CD4-positive, alpha-beta memory T cell (primary cell): ENCODE measurements at regions of chr1 and their contacts with region 1.

Region 1: DNA sequence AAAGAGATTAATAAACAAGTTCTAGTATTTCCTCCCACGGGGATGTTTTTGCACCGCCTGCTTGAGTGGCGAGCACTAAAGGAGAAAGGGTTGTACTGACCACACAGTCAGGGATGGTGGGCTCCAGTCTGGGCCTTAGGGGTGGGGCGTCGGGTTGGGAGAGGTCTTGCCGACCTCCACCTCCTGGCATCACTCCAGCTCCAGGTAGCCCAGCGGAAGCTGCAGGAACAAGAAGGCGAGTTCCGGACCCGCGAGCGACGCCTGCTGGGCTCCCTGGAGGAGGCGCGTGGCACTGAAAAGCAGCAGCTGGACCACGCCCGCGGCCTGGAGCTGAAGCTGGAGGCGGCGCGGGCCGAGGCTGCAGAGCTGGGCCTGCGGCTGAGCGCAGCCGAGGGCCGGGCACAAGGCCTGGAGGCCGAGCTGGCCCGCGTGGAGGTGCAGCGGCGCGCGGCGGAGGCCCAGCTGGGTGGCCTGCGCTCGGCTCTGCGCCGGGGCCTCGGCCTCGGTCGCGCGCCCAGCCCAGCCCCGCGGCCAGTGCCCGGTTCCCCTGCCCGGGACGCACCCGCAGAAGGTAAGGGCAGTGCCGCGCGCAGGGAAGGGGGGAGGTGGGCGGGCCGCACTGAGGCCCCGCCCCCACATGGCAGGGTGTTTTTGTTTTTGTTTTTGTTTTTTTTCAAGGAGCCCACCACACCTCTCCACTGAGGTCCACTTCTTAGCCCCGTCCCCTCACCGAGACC is 19.7 kb downstream of the MFAP2 start:
- DNase-seq: peak; percentile 68 to 79 (median 68)
- H3K4me3 ChIP-seq: peak overlapping the region; percentile 8 to 62
- H3K4me3 Mint-ChIP-seq: peak overlapping the region; percentile 84 to 92 (median 88)
- H3K27ac ChIP-seq: peak overlapping the region; percentile 37
- H3K27ac Mint-ChIP-seq: peak overlapping the region; percentile 41 to 91 (median 74)
- H3K4me1 ChIP-seq: peaks cover 13% of the 10 kb centered on the region
- H3K4me1 Mint-ChIP-seq: peaks cover 6 to 16% (median 13%) of the 10 kb centered on the region in 4 donors
- H3K27me3 ChIP-seq: no peaks in the 10 kb centered on the region
- H3K27me3 Mint-ChIP-seq: no peaks in the 10 kb centered on the region

Region 2: DNA sequence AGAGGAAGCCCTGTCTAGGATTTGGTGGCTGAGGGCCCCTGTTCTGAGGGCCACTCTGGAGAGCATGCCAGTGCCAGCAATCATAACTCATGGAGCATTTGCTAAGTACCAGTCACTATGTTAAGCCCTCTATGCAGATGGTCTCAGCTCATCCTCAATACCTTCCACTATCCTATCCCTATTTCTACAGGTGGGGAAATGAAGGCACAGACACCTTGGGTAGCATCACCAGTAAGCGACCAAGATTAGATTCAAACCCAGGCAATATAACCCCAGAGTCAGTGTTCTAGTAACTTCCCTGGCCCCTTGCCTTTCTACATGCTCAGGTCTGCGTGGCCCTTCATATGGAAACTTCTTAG is 339.4 kb before region 1 on chr1:
- CTCF ChIA-PET with region 1: interaction called, 15 read pairs
- POLR2A ChIA-PET with region 1: no interaction called
- intact Hi-C with region 1: no loop called
- DNase-seq: no peak
- H3K4me3 ChIP-seq: no peak overlapping the region
- H3K4me3 Mint-ChIP-seq: no peak overlapping the region
- H3K27ac ChIP-seq: no peak overlapping the region
- H3K27ac Mint-ChIP-seq: no peak overlapping the region
- H3K4me1 ChIP-seq: no peaks in the 10 kb centered on the region
- H3K4me1 Mint-ChIP-seq: peaks cover 0 to 3% (median 0%) of the 10 kb centered on the region in 4 donors
- H3K27me3 ChIP-seq: no peaks in the 10 kb centered on the region
- H3K27me3 Mint-ChIP-seq: no peaks in the 10 kb centered on the region

Region 3: DNA sequence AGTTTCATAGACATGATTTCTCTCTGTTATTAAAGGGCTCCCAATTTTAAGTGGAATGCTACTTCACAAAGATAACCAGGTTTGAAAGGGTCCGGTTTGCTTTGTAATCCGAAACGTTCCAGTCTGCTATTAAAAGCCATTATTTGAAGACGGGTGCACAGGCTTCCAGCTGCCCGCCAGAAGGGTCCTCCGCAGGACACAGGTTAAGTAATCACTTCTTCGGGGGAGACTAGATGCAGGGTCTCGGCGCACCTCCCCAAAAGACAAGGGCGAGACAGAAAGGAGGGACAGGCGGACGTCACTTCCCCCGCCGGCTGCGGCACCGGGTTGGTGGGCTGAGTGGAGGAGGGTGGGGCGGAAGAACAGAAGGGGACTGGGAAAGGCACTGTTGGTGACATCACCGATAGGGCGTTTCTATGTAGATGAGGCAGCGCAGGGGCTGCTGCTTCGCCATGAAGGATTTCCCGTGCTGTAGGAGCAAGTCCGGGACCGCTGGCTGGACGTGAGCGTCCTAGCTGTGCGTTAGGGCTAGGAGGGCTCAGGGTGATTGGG is 56.1 kb before region 1 on chr1:
- CTCF ChIA-PET with region 1: interaction called, 7 read pairs
- POLR2A ChIA-PET with region 1: interaction called, 13 read pairs
- intact Hi-C with region 1: no loop called
- DNase-seq: peak; percentile 99 to 100 (median 100)
- H3K4me3 ChIP-seq: peak overlapping the region; percentile 38 to 66
- H3K4me3 Mint-ChIP-seq: no peak overlapping the region
- H3K27ac ChIP-seq: peak overlapping the region; percentile 97
- H3K27ac Mint-ChIP-seq: no peak overlapping the region
- H3K4me1 ChIP-seq: peaks cover 35% of the 10 kb centered on the region
- H3K4me1 Mint-ChIP-seq: peaks cover 12 to 39% (median 21%) of the 10 kb centered on the region in 4 donors
- H3K27me3 ChIP-seq: no peaks in the 10 kb centered on the region
- H3K27me3 Mint-ChIP-seq: no peaks in the 10 kb centered on the region

Region 4: DNA sequence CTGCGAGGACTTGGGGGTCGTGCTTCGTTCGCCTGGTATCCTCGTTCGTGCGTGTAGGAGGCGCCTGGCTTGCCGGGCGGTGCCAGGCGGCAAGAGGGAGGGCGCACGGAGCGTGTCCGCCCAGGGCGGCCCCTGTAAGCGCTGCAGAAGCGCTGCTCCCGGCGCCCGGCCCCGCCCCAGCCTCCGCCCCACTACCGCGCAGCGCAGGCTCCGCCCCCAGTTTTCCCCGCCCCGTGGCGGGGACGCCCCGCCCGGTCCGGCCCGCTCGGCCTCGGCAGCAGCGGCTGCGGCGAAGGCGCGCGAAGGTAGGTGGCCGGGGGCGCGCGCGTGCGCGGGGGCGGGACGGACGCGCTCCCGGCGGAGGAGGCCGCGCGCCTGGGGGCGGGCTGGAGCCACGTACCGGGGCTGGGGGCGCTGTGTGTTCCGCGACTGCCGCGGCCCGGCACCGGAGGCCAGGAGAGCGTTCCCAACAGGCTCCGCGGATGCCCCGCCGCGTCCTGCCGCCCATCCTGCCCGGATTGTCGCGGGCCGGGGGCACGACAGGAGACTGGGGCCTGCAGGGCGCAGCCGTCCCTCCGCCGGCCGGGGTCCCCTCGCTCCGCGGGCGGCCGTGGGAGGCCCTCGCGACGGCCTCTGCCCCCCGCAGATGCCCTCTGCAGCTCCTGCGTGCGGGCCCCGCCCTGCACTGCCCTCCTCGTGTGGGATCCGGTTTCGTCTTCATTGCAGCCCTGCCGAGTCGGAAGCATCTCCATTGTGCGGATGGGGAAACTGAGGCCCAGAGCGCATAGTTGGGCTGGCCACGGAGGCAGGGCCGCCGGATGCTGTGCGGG is 46.7 kb before region 1 on chr1:
- CTCF ChIA-PET with region 1: no interaction called
- POLR2A ChIA-PET with region 1: no interaction called
- intact Hi-C with region 1: loop called (anchors 5 kb)
- DNase-seq: peak; percentile 88 to 93 (median 90)
- H3K4me3 ChIP-seq: peak overlapping the region; percentile 17 to 80
- H3K4me3 Mint-ChIP-seq: peak overlapping the region; percentile 85 to 92 (median 89)
- H3K27ac ChIP-seq: peak overlapping the region; percentile 67
- H3K27ac Mint-ChIP-seq: peak overlapping the region; percentile 66 to 93 (median 89)
- H3K4me1 ChIP-seq: peaks cover 27% of the 10 kb centered on the region
- H3K4me1 Mint-ChIP-seq: peaks cover 5 to 53% (median 37%) of the 10 kb centered on the region in 4 donors
- H3K27me3 ChIP-seq: no peaks in the 10 kb centered on the region
- H3K27me3 Mint-ChIP-seq: no peaks in the 10 kb centered on the region

Region 5: GRCh38 chr1:16946646-16947045 is 14.1 kb before region 1 on chr1:
- CTCF ChIA-PET with region 1: interaction called, 75 read pairs
- POLR2A ChIA-PET with region 1: interaction called, 8 read pairs
- intact Hi-C with region 1: no loop called
- DNase-seq: no peak
- H3K4me3 ChIP-seq: no peak overlapping the region
- H3K4me3 Mint-ChIP-seq: no peak overlapping the region
- H3K27ac ChIP-seq: no peak overlapping the region
- H3K27ac Mint-ChIP-seq: no peak overlapping the region
- H3K4me1 ChIP-seq: peaks cover under 1% of the 10 kb centered on the region
- H3K4me1 Mint-ChIP-seq: peaks cover 0 to 3% (median under 1%) of the 10 kb centered on the region in 4 donors
- H3K27me3 ChIP-seq: no peaks in the 10 kb centered on the region
- H3K27me3 Mint-ChIP-seq: no peaks in the 10 kb centered on the region

Region 6: DNA sequence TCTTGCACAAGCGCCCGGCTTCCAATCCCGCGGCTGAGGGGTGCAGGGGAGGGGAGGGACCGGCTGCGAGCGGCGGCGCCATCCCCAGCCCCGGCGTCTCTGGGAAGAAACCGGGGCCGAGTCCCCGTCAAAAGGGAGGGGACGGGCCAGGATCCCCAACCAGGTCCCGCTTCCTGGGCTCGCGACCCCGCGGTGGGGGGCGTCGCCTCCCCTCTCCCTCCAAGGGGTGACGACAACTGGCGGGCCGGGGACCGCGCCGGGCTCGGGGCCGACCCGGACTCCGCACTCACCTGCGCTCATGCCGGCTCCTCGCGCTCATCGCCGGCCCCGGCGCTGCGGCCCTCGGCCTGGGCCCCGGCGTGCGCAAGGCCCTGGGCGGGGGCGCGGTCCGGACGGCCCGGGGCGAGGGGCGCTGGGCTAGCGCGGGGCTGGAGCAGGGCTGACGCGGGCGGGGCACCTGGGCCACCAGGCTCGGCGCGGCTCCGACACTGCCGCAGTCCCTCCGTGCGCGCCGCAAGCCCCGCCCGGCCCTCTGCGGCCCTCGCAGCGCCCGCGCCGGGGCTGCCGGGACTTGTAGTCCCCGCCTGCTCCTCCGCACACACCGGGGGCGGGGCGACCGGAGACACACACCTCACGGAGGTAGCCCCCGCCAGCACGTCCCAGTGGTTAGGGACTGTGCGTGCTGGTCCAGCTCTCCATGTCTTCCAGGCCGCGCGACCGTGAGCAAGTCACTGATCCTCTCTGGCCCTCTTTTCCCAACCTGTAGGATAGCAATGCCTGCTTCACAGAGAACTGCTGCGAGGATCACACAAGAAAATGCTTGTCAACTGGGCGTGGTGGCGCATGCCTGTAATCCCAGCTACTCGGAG is 50.9 kb after region 1 on chr1 and contains the start of gene ATP13A2:
- CTCF ChIA-PET with region 1: interaction called, 5 read pairs
- POLR2A ChIA-PET with region 1: no interaction called
- intact Hi-C with region 1: loop called (anchors 5 kb)
- DNase-seq: peak; percentile 83 to 85 (median 84)
- H3K4me3 ChIP-seq: peak within 1 kb of the TSS; percentile 84 to 87
- H3K4me3 Mint-ChIP-seq: peak within 1 kb of the TSS; percentile 85 to 91 (median 88)
- H3K27ac ChIP-seq: peak within 1 kb of the TSS; percentile 73
- H3K27ac Mint-ChIP-seq: peak within 1 kb of the TSS; percentile 47 to 89 (median 84)
- H3K4me1 ChIP-seq: peaks cover 27% of the 10 kb centered on the region
- H3K4me1 Mint-ChIP-seq: peaks cover 10 to 23% (median 17%) of the 10 kb centered on the region in 4 donors
- H3K27me3 ChIP-seq: no peaks in the 10 kb centered on the region
- H3K27me3 Mint-ChIP-seq: no peaks in the 10 kb centered on the region
- total RNA-seq, gene ATP13A2: 54.6 to 56.5 TPM

Region 7: DNA sequence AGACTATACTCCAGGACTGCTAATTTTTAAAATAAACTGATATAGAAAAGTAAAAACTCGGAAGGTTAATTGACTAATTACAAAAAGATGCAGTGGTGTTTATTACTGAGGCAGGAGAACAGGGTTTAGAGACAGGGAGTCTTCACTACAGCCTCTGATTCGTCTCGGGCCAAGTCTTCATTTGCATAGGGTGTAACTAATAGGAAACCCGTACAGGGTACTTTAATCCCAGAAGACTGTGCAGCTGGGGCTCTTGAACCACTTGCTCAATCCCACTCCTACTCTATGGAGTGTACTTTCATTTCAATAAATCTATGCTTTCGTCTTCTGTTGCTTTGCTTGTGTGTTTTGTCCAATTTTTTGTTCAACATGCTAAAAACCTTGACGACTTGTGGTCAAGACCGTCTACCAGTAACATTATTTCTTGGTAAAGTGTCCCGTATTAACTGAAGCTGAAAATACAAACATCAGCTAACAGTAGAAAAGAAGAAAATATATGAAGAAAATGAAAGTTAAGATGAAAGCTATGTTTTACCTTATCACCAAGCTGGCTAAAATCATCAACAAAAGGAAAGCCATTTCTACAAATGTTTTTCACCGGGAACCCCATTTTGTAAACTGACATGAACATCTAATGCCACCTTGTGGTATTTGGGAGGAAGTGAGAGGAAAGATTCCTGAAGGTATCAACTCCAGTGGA is 85.1 kb after region 1 on chr1:
- CTCF ChIA-PET with region 1: interaction called, 11 read pairs
- POLR2A ChIA-PET with region 1: interaction called, 3 read pairs
- intact Hi-C with region 1: no loop called
- DNase-seq: peak in 4 of 5 donors; percentile 29 to 39 (median 35)
- H3K4me3 ChIP-seq: no peak overlapping the region
- H3K4me3 Mint-ChIP-seq: peak overlapping the region in 3 of 8 donors; percentile 36 to 64 (median 46)
- H3K27ac ChIP-seq: no peak overlapping the region
- H3K27ac Mint-ChIP-seq: peak overlapping the region in 5 of 7 donors; percentile 51 to 86 (median 81)
- H3K4me1 ChIP-seq: peaks cover 5% of the 10 kb centered on the region
- H3K4me1 Mint-ChIP-seq: peaks cover 13 to 21% (median 16%) of the 10 kb centered on the region in 4 donors
- H3K27me3 ChIP-seq: no peaks in the 10 kb centered on the region
- H3K27me3 Mint-ChIP-seq: no peaks in the 10 kb centered on the region

Region 8: DNA sequence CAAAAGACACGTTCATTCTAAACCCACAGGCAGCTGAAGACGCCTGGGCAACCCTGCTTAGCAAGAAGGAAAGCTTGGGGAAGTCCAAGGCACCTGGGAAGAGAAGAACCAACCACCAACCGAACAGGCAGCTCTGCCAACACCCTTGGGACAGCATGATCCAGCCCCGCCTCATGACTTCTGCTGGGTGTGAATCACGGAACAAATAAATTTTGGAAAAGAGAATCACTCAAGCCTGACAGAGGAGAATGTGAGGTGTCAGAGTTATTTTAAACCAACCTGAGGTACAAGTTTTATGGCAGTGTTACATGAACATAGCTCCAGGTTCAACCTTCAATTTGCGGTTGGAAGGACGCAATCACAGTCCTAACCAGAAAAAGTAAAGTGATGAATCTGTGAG is 337.3 kb after region 1 on chr1:
- CTCF ChIA-PET with region 1: no interaction called
- POLR2A ChIA-PET with region 1: no interaction called
- intact Hi-C with region 1: no loop called
- DNase-seq: no peak
- H3K4me3 ChIP-seq: no peak overlapping the region
- H3K4me3 Mint-ChIP-seq: no peak overlapping the region
- H3K27ac ChIP-seq: no peak overlapping the region
- H3K27ac Mint-ChIP-seq: no peak overlapping the region
- H3K4me1 ChIP-seq: no peaks in the 10 kb centered on the region
- H3K4me1 Mint-ChIP-seq: no peaks in the 10 kb centered on the region
- H3K27me3 ChIP-seq: no peaks in the 10 kb centered on the region
- H3K27me3 Mint-ChIP-seq: peaks cover 14 to 17% of the 10 kb centered on the region in 2 donors